OCI-LY7 (cell line): ENCODE measurements at regions of chr2 and their contacts with region 1.

Region 1: DNA sequence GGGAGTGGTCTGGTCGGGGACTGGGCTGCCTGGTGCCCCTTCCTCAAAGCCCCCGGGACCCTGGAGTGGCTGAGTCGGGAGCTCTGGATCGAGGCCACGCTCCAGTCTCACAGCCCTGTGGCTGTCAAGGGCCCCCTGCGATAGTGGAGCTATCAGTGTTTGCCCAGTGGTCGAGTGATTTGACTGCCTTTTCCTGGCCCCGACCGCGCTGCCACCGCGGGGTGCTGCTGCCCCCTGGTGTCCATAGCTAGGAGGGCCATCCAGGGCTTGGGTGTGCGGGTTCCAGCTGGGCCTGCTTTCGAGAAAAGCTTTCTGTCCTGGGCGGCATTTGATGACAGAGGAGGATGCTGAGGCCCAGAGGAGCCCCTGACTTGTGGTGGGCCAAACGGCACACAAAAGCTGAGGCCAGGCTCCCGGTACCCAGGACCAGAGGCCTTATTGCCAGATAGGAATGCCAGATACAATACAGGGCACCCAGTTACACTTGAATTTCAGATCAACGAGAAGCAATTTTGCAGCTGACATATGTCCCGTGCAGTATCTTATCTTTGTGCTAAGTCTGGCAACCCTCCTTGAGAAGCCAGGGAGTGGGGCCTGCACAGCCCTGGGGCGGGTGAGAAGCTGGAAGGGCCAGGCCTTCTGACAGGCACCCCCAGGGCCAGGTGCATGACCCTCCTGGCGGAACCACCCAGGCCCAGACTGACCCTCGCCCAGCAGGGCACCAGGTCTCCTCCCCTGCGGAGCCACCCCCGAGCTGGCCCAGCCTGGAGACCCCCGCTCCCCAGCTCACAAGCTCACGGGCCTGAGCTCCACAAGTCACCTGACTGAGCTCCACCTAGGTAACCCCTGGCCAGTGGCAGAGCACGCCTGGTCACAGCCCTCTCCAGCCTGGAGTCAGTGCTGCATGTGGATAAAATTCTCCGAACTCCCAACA is 13.0 kb downstream of the ODC1 start:
- DNase-seq: peak; percentile 80
- H3K4me3 ChIP-seq: no peak overlapping the region
- H3K27ac ChIP-seq: no peak overlapping the region
- H3K4me1 ChIP-seq: peaks cover 5% of the 10 kb centered on the region
- CTCF ChIP-seq: peak; percentile 94

Region 2: DNA sequence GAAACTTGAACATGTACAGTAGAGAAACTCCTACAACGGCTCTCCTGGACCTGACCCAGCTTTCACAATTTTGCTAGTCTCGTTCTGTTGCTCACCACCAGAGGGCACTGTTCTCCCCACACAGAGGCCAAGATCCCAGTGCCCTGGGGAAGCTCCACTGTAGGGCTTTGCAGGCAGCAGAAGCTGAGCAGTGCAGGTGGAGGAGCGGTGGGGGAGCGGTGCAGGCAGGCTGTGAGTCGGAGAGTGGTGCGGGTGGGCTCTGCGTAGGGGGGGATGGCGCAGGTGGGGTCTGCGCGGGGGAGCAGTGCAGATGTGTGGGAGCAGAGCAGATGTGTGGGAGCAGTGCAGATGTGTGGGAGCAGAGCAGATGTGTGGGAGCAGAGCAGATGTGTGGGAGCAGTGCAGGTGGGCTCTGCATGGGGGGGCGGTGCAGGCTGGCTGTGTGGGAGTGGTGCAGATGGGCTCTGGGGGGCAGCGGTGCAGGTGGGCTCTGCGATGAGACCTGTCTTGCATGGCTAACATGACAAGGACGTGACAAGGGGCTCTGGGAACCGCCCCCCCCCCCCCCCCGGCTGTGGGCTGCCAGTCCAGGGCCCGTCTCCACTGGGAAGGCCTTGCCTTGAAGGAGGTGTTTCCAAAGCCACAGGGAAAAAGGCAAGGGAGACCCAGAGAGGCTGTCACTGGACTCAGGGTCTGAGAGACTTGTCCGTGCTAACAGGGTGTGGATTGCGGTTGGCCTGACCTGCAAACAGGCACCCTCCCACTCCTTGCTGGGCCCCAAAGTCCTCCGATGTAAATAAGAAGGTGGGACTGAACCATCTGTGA is 362.3 kb before region 1 on chr2:
- CTCF ChIA-PET with region 1: interaction called, 11 read pairs
- POLR2A ChIA-PET with region 1: no interaction called
- intact Hi-C with region 1: loop called (anchors 1 kb)
- DNase-seq: peak; percentile 91
- H3K4me3 ChIP-seq: no peak overlapping the region
- H3K27ac ChIP-seq: no peak overlapping the region
- H3K4me1 ChIP-seq: peaks cover 17% of the 10 kb centered on the region
- CTCF ChIP-seq: peak; percentile 93

Region 3: DNA sequence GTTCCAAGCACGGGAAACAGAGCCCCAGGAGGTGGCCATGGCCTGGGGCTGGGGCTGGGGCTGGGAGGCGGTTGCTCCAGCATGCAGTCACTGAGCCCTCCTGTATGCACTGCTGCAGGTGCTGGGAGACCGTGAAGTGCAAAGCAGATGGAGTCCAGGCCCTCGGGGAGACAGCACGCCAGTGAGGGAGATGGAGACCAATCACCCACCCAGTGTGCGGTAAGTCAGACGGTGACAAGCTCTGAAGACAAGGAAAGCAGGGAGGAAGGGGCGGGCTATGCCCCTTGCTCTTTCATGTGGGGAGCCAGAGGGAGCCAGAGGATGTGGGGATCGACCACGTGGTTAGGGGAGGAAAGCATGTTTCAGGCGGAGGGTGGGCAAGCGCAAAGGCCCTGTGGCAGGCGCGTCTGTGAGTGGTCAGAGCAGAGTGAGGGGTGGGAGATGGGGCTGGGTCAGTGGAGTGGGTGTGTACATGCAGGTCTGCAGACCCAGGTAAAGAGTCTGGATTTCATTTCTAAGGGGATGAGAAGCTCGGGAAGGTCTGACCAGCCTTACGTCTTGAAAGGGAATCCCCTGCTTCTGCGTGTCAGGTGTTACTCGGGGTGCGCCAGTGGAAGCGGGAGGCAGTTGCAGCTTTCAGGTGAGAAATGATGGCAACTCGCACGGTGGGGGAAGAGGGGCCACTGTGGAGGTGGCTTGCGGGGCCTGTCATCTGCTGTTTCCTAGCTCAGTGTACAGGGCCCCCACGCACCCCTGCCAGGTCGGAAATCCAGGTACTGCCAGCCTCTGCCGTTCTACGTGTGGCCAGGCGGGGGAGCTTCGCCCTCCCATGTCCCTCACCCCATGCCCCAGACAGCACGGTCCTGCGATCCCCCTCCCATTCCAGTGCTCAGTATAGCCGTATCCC is 293.2 kb before region 1 on chr2:
- CTCF ChIA-PET with region 1: interaction called, 3 read pairs
- POLR2A ChIA-PET with region 1: no interaction called
- intact Hi-C with region 1: loop called (anchors 5 kb)
- DNase-seq: peak; percentile 48
- H3K4me3 ChIP-seq: no peak overlapping the region
- H3K27ac ChIP-seq: no peak overlapping the region
- H3K4me1 ChIP-seq: no peaks in the 10 kb centered on the region
- CTCF ChIP-seq: peak; percentile 70

Region 4: GRCh38 chr2:10216677-10217488 is 218.3 kb before region 1 on chr2:
- CTCF ChIA-PET with region 1: no interaction called
- POLR2A ChIA-PET with region 1: no interaction called
- intact Hi-C with region 1: loop called (anchors 5 kb)
- DNase-seq: no peak
- H3K4me3 ChIP-seq: no peak overlapping the region
- H3K27ac ChIP-seq: no peak overlapping the region
- H3K4me1 ChIP-seq: no peaks in the 10 kb centered on the region
- CTCF ChIP-seq: no peak

Region 5: DNA sequence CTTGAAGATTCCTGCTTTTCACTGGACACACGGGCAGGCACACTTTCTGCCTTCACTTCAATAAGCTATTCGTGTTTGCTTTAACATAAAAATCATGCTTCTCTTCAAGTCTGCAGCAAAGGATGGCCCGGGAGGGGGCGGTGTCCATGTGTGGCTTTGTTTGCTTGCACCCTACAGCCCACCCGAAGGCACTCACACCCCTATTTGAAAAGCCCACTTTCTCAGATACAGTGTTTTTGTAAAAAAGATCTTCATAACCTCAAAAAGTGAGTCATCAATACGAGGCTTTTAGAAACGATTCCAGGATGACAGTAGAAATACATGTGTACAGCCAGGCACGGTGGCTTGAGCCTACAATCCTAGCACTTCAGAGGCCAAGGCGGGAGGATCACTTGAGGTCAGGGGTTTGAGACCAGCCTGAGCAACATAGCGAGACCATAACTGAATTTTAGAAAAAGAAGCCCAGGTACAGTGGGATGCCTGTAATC is 169.0 kb before region 1 on chr2:
- CTCF ChIA-PET with region 1: interaction called, 6 read pairs
- POLR2A ChIA-PET with region 1: interaction called, 5 read pairs
- intact Hi-C with region 1: loop called (anchors 1 kb)
- DNase-seq: no peak
- H3K4me3 ChIP-seq: no peak overlapping the region
- H3K27ac ChIP-seq: no peak overlapping the region
- H3K4me1 ChIP-seq: no peaks in the 10 kb centered on the region
- CTCF ChIP-seq: peak; percentile 52